Testis (tissue), 5 donors: ENCODE measurements at regions of chr7 and their contacts with region 1.

Region 1: DNA sequence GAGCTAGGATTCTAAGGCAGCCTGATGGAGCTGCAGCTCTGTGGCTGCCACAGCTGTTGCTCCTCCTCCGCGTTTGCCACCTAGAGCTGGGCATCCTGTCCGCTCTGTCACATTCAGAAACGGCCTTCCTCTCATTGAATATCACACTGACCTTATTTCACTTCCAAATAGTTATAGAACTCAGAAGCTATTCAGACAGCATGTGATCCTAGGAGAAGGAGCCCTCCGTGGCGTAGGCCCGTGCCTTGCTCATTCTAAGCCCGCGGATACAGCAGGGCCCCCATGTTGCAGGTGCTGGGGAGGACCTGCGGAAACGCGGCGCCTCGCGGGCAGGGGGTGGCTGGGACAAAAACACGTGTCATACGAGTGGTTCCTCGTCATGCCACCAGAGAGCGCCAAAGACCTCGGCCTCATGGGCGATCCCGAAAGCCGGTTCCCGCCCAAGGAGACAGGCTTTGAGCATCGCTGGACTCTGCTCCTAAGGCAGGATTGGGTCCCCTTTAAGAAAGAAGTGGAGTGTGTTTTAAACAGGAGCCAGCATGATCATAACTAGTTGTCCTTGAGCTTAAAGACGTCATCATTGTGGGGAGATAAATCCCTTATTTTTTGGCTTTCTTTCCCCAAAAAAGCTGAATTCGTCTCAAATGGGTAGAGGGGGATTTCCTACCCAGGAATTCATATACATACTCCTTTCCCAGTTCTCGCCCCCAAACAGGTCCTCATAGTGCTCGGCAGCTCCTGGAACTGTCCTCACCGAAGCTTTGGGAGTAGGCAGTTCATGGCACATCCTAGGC is 17.9 kb upstream of the FIGNL1 start:
- DNase-seq: peak; percentile 89
- H3K4me3 ChIP-seq: no peak overlapping the region
- H3K27ac ChIP-seq: no peak overlapping the region
- H3K4me1 ChIP-seq: no peaks in the 10 kb centered on the region
- H3K27me3 ChIP-seq: no peaks in the 10 kb centered on the region
- CTCF ChIP-seq: peak; percentile 77 to 87 (median 86)
- POLR2A ChIP-seq: no peak

Region 2: DNA sequence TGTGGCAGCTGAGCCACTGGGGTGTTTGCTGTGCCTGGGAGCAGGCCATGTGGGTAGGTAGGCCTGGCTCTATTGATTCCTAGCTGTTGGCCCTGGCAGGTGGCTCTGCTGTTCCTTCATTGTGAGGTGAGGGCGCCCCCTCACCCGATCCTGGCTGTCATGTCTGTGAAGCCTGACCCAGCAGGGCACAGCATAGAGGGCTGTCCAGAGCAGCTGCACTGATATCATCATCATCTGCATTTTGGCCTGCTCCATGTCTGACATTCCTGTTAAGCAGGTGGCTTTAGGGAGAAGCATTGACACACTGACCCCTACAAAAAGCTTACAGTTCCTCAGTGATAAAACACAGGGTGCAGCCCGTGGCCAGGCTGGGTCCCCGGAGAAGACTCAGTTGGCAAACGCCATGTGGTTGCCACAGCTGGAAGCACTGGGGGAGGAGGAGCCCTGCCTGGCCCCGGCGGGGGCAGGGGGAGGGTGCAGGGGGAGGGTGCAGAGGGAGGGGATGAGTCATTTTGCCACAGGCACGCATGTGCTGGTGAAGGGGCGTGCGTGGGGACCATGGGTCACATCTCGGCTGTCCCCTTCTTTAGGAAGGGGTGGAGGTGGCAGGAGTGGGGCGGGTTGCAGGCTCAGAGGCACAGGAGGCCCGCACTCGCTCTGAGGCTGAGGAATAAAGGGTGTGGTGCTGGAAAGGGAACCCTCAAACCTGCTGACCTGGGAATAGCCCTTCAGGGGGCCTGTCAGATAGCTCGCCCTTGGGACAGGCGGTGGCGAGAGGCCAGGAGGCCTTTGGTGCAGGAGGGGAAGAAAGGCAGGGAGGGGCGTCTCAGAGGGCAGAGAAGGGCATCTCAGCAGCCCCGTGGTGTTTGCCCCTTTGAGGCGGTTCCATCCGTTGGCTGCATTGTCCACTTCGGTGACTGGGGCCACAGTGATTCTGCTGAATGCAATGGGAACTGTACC is 131.9 kb before region 1 on chr7:
- intact Hi-C with region 1: no loop called
- DNase-seq: no peak
- H3K4me3 ChIP-seq: no peak overlapping the region
- H3K27ac ChIP-seq: no peak overlapping the region
- H3K4me1 ChIP-seq: no peaks in the 10 kb centered on the region
- H3K27me3 ChIP-seq: no peaks in the 10 kb centered on the region
- CTCF ChIP-seq: no peak
- POLR2A ChIP-seq: no peak

Region 3: GRCh38 chr7:50632561-50633413 is 164.8 kb after region 1 on chr7:
- intact Hi-C with region 1: loop called (anchors 10 kb)
- DNase-seq: peak; percentile 59
- H3K4me3 ChIP-seq: no peak overlapping the region
- H3K27ac ChIP-seq: no peak overlapping the region
- H3K4me1 ChIP-seq: no peaks in the 10 kb centered on the region
- H3K27me3 ChIP-seq: no peaks in the 10 kb centered on the region
- CTCF ChIP-seq: peak; percentile 54 to 74 (median 72)
- POLR2A ChIP-seq: no peak

Region 4: GRCh38 chr7:50679218-50680007 is 211.4 kb after region 1 on chr7:
- intact Hi-C with region 1: loop called (anchors 10 kb)
- DNase-seq: no peak
- H3K4me3 ChIP-seq: no peak overlapping the region
- H3K27ac ChIP-seq: no peak overlapping the region
- H3K4me1 ChIP-seq: no peaks in the 10 kb centered on the region
- H3K27me3 ChIP-seq: no peaks in the 10 kb centered on the region
- CTCF ChIP-seq: peak in 2 of 3 experiments; percentile 20 to 38
- POLR2A ChIP-seq: no peak